ENCODE measurements at regions of chr15 and their contacts with region 1.

Region 1: GRCh38 chr15:63833021-63833696 is 589 bp downstream of the HERC1 start:
- DNase-seq: peak; percentile 89
- H3K4me3 ChIP-seq: peak overlapping the region; percentile 71 to 90 (median 80)
- H3K27ac ChIP-seq: peak overlapping the region; percentile 93 to 98 (median 96)
- H3K4me1 ChIP-seq: peaks cover 20 to 62% (median 50%) of the 10 kb centered on the region in 6 donors
- H3K27me3 ChIP-seq: no peaks in the 10 kb centered on the region
- CTCF ChIP-seq: no peak
- POLR2A ChIP-seq: no peak

Region 2: GRCh38 chr15:63922261-63922904 is 89.2 kb after region 1 on chr15:
- intact Hi-C with region 1: no loop called
- DNase-seq: peak; percentile 21
- H3K4me3 ChIP-seq: no peak overlapping the region
- H3K27ac ChIP-seq: no peak overlapping the region
- H3K4me1 ChIP-seq: peaks cover 0 to 20% (median 7%) of the 10 kb centered on the region in 6 donors
- H3K27me3 ChIP-seq: no peaks in the 10 kb centered on the region
- CTCF ChIP-seq: no peak
- POLR2A ChIP-seq: no peak

Region 3: GRCh38 chr15:64032329-64032728 is 199.2 kb after region 1 on chr15:
- intact Hi-C with region 1: no loop called
- DNase-seq: no peak
- H3K4me3 ChIP-seq: no peak overlapping the region
- H3K27ac ChIP-seq: peak overlapping the region in 1 of 8 donors; percentile 1
- H3K4me1 ChIP-seq: peaks cover 0 to 41% (median 5%) of the 10 kb centered on the region in 6 donors
- H3K27me3 ChIP-seq: no peaks in the 10 kb centered on the region
- CTCF ChIP-seq: no peak
- POLR2A ChIP-seq: no peak

Region 4: GRCh38 chr15:64046347-64047153 is 213.4 kb after region 1 on chr15 and contains the start of gene DAPK2:
- intact Hi-C with region 1: loop called (anchors 10 kb)
- DNase-seq: peak; percentile 93
- H3K4me3 ChIP-seq: peak within 1 kb of the TSS; percentile 40 to 71 (median 55)
- H3K27ac ChIP-seq: peak within 1 kb of the TSS; percentile 40 to 90 (median 64)
- H3K4me1 ChIP-seq: peaks cover 24 to 90% (median 60%) of the 10 kb centered on the region in 6 donors
- H3K27me3 ChIP-seq: no peaks in the 10 kb centered on the region
- CTCF ChIP-seq: peak; percentile 20 to 91 (median 82)
- POLR2A ChIP-seq: no peak
- total RNA-seq, gene DAPK2: 12.2 to 38.3 (median 20.6) TPM